Left colon (tissue), 2 donors: ENCODE measurements at regions of chr17 and their contacts with region 1.

Region 1: GRCh38 chr17:49548506-49549310 is 27.0 kb upstream of the NXPH3 start:
- DNase-seq: peak in 1 of 2 donors; percentile 49
- ATAC-seq: peak; percentile 52

Region 2: GRCh38 chr17:49361902-49362722 is 186.6 kb before region 1 on chr17 and contains the start of gene ZNF652:
- intact Hi-C with region 1: no loop called
- DNase-seq: peak; percentile 95 to 96
- ATAC-seq: peak; percentile 87
- total RNA-seq, gene ZNF652: 52.4 to 53.2 TPM

Region 3: DNA sequence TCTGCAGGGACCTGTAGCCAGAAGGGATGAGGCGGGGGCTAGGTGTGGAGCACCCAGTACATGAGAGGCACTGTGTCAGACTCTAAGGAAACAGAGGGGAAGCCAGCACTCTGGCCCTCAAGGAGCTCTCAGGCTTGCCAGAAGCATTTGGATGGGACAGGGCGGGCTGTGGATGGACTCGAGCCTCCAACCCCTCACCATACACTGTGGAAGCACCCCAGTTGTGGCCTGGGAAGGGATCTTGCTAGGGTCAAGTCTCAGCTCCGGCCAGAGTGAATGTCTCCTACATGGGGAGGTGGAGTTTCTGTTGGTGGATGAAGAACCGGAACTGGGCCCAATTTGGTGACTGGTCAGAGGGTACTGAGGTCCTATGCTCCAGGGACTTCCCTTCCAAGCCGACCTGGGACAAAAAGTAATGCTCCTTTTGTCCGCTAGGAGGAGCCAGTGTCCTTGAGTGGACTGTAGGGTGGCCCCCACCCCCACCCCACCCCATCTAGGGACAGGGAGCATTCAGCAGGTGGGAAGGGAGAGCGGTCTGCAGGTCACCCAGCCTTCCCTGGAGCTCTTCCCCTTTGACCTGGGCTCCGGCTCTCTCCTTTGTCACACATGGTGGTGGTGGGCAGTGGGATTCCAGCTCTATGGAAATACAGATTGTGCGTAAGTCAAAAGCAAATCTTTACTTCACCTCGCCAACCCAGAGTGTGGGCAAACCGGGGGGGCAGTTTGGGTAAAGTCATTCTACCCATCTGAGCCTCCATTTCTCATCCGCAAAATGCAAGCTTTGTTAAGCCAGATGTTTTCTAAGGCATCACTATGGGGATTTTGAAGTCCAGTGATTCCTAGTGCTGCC is 113.7 kb before region 1 on chr17:
- intact Hi-C with region 1: loop called in 1 of 2 experiments (anchors 5 kb)
- DNase-seq: peak in 1 of 2 donors; percentile 36
- ATAC-seq: peak; percentile 50

Region 4: DNA sequence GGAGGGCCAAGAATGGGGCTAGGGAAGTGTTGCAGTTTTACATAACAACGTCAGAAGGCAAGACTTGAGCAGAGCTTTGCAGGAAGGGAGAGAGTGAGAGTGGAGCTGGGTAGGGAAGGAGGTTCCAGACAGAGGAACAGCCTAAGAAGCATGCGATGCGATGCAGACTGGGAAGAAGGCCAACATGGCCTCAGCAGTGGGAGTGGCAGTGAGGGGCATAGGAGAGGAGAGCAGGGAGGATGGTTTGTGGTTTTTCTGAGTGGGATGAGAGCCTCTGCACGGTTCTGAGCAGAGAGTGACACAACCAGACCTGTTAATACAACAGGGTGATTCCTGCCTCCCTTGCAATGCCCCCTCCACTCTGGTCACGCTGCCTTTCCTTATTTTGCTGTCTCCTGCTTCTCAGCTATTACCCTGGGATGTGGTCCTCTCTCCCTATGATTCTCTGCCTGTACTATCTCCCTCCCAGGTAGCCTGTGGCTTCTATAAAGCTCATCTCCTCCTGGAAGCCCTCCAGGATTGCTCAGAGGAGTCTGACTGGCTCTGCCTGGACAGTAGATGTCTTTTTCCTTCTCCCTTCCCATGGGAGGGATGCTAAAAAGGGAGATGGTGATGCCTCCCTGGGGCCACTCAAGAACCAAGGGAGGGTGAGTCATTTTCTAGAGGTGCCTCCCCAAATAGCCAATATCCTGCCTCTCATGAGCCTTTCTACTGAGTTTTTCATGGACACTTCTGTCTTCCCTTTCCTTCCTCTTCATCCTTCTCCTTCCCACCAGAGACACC is 92.3 kb before region 1 on chr17:
- intact Hi-C with region 1: no loop called
- DNase-seq: no peak
- ATAC-seq: no peak

Region 5: GRCh38 chr17:49616601-49617131 is 68.0 kb after region 1 on chr17:
- intact Hi-C with region 1: no loop called
- DNase-seq: peak; percentile 23 to 42
- ATAC-seq: no peak